ENCODE measurements at regions of chr3 and their contacts with region 1.

Region 1: GRCh38 chr3:112464264-112464663 is 35.0 kb downstream of the BTLA start:
- DNase-seq: peak in 7 of 9 donors; percentile 28 to 56 (median 47)
- ATAC-seq: peak; percentile 83
- H3K4me3 ChIP-seq: peak overlapping the region; percentile 7
- H3K4me3 Mint-ChIP-seq: peak overlapping the region; percentile 39 to 84 (median 74)
- H3K27ac ChIP-seq: peak overlapping the region; percentile 43
- H3K27ac Mint-ChIP-seq: peak overlapping the region; percentile 55 to 96 (median 86)
- H3K4me1 ChIP-seq: peaks cover 54 to 63% of the 10 kb centered on the region in 2 donors
- H3K4me1 Mint-ChIP-seq: peaks cover 40 to 95% (median 88%) of the 10 kb centered on the region in 7 donors
- H3K27me3 ChIP-seq: no peaks in the 10 kb centered on the region
- H3K27me3 Mint-ChIP-seq: no peaks in the 10 kb centered on the region

Region 2: GRCh38 chr3:112482675-112483074 is 18.4 kb after region 1 on chr3:
- CTCF ChIA-PET with region 1: no interaction called
- POLR2A ChIA-PET with region 1: interaction called, 7 read pairs
- intact Hi-C with region 1: loop called (anchors 2 kb)
- DNase-seq: no peak
- ATAC-seq: no peak
- H3K4me3 ChIP-seq: peak overlapping the region; percentile 32
- H3K4me3 Mint-ChIP-seq: peak overlapping the region; percentile 13 to 81 (median 70)
- H3K27ac ChIP-seq: peak overlapping the region; percentile 5
- H3K27ac Mint-ChIP-seq: peak overlapping the region; percentile 65 to 93 (median 80)
- H3K4me1 ChIP-seq: peaks cover 25 to 27% of the 10 kb centered on the region in 2 donors
- H3K4me1 Mint-ChIP-seq: peaks cover 39 to 94% (median 67%) of the 10 kb centered on the region in 7 donors
- H3K27me3 ChIP-seq: no peaks in the 10 kb centered on the region
- H3K27me3 Mint-ChIP-seq: no peaks in the 10 kb centered on the region

Measured in naive thymus-derived CD4-positive, alpha-beta T cell (primary cell).